ENCODE measurements at regions of chr14 and their contacts with region 1.

Region 1: GRCh38 chr14:22994762-22995275 is 12.5 kb upstream of the AJUBA start:
- DNase-seq: peak; percentile 29
- H3K4me3 Mint-ChIP-seq: no peak overlapping the region
- H3K27ac Mint-ChIP-seq: no peak overlapping the region
- H3K4me1 Mint-ChIP-seq: no peaks in the 10 kb centered on the region
- H3K27me3 Mint-ChIP-seq: no peaks in the 10 kb centered on the region

Region 2: DNA sequence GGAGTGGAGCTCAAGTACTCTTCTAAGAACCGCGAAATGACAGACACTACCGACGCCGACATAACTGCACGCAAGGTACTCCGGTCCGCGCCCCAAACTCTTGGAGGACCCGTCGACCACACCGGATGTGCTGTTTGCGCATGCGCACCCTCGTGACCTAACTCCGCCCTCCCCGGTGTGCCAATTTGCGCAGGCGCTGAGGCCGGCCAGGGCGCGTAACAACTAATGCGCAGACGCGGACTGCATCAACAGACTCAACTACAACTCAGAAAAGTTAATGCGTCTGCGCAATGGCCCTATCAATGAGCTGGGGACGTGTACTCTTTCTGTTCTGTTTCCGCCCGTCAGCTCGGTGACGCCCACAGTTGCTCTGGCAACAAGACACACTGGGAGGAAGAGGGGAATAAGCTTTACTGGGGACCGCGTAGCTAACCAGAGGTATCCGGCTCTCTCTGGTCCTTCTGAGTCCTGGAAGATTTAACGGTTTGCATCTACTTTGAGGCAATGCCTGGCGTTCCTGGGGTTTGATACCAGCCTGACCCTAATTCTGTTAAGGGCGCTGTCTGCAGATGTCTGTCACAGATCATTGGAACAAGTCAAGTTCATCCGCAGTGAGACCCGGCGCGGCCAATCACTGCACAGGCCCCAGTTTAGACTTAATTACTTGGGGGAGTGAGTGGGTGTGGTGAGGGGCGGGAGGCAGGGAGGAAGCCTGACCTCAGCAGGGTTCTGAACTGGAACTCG is 405.6 kb before region 1 on chr14 and contains the start of gene DAD1:
- CTCF ChIA-PET with region 1: no interaction called
- POLR2A ChIA-PET with region 1: no interaction called
- DNase-seq: peak; percentile 100
- H3K4me3 Mint-ChIP-seq: peak within 1 kb of the TSS; percentile 93
- H3K27ac Mint-ChIP-seq: peak within 1 kb of the TSS; percentile 98
- H3K4me1 Mint-ChIP-seq: peaks cover 55% of the 10 kb centered on the region
- H3K27me3 Mint-ChIP-seq: peaks cover 6% of the 10 kb centered on the region
- total RNA-seq, gene DAD1: 160 to 167 TPM

Region 3: DNA sequence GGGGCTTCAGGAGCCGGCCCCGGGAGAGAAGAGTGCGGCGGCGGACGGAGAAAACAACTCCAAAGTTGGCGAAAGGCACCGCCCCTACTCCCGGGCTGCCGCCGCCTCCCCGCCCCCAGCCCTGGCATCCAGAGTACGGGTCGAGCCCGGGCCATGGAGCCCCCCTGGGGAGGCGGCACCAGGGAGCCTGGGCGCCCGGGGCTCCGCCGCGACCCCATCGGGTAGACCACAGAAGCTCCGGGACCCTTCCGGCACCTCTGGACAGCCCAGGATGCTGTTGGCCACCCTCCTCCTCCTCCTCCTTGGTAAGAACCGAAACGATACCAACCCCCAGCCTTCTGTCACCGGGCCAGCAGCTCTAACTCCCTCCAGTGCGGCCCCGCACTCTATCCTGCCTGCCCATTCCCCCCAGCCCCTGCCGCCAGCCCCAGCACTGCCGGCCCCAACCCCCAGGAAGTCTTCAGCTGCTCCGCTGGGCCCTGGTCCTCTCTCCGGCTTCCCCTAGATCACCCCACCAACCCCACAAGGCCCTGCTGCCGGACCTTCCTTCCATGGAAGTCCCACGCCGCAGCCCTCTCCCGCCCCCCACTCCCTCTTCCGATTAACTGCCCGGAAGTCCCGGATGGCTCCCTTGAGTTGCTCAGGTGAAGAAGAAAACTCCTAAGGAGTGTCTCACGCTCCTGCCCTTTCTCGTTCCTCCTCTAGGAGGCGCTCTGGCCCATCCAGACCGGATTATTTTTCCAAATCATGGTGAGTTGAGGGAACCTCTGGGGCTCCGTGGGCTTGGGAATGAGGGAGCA is 122.6 kb before region 1 on chr14:
- CTCF ChIA-PET with region 1: no interaction called
- POLR2A ChIA-PET with region 1: no interaction called
- DNase-seq: peak; percentile 76
- H3K4me3 Mint-ChIP-seq: peak overlapping the region; percentile 86
- H3K27ac Mint-ChIP-seq: peak overlapping the region; percentile 97
- H3K4me1 Mint-ChIP-seq: peaks cover 39% of the 10 kb centered on the region
- H3K27me3 Mint-ChIP-seq: no peaks in the 10 kb centered on the region

Region 4: DNA sequence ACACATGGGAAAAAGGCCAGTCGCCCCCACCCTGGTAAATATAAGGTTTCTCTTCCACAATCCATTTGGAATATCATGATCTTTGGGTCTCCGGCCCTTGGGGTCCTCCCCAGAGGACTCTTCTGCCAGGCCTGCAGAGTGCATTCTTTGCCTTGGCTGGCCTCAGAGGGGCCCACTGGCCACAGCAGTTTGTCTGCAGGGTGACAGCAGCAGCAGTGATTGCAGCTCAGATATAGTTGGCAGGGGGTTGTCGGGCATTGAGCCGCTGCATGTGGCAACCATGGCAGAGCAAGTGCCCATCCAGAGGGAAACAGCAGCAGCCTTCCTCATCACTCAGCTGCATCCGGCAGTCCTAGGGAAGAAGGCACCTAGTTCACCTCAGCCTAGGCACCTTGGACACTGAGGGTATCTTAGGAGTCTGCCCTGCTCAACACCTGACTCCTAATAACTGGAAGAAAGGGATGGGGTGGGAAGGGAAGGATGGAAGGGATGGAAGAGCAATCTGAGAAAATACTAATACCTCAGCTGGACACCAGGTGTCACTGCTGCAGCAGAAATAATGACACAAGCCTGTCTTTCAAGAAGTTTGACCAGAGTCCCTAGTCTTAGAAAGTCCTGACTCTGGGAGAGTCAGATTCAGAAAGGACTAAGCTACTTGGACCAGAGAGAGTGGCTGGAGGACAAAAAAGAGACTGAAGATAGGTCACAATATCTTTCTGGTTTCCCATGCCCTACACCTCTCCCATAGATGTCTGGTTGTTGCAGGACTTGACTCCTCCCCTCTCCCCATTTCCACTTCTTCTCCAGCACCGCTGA is 21.4 kb before region 1 on chr14:
- CTCF ChIA-PET with region 1: interaction called, 22 read pairs
- POLR2A ChIA-PET with region 1: no interaction called
- DNase-seq: peak; percentile 43
- H3K4me3 Mint-ChIP-seq: no peak overlapping the region
- H3K27ac Mint-ChIP-seq: no peak overlapping the region
- H3K4me1 Mint-ChIP-seq: no peaks in the 10 kb centered on the region
- H3K27me3 Mint-ChIP-seq: peaks cover 13% of the 10 kb centered on the region